ENCODE measurements at regions of chr1 and their contacts with region 1.

Region 1: GRCh38 chr1:41416552-41417334 is 55.5 kb downstream of the FOXO6 start:
- DNase-seq: peak; percentile 73

Region 2: DNA sequence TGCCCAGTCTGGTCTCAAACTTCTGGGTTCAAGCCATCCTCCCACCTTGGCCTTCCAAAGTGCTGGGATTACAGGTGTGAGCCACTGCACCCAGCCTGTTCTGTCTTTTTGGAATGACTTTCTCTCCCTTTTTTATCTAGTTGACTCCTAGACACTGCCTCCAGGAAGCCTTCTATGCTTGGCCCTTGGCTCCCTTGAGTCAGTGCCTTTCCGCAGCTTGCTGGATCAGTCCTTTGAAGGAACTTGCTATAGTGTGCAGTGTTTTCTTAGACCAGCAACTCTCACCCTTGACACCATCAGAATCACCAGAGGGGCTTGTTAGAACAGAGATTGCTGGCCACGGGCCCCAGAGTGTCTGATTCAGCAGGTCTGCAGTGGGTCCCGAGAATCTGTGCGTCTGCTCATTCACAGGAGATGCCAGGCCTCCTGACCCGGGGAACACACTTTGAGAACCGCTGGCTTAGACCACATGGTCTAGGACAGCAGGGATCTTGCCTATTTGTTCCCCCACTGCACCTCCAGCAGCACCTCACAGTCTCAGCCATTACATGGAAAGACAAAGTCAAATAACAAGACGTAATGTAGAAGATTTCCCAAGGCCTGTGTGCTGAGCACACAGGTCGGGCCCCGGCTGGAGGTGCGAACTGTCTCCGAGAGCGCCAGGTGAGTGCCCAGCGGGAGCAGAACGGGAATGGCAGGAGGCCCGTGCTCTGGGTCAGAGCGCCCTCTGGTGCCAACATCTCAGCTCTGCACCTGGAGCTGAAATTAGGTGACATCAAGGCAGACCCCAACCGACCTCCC is 464.6 kb before region 1 on chr1:
- in situ Hi-C with region 1: no loop called
- DNase-seq: peak; percentile 75

Region 3: GRCh38 chr1:41322835-41323627 is 93.7 kb before region 1 on chr1:
- in situ Hi-C with region 1: loop called (anchors 10 kb)
- DNase-seq: peak; percentile 74

Measured in KBM-7 (cell line).